Activated CD8-positive, alpha-beta T cell treated with anti-CD3 and anti-CD28 coated beads, Interleukin-2, amount 10 ng/mL, durations not matched to agents 7 days and 5 days (primary cell): ENCODE measurements at regions of chr3 and their contacts with region 1.

Region 1: GRCh38 chr3:119240591-119241434 is at the start of gene B4GALT4:
- DNase-seq: peak; percentile 85
- ATAC-seq: peak; percentile 87
- H3K4me3 Mint-ChIP-seq: peak within 1 kb of the TSS; percentile 79
- H3K27ac Mint-ChIP-seq: peak within 1 kb of the TSS; percentile 80
- H3K4me1 Mint-ChIP-seq: peaks cover 45% of the 10 kb centered on the region
- H3K27me3 Mint-ChIP-seq: no peaks in the 10 kb centered on the region
- total RNA-seq, gene B4GALT4: 16.3 to 16.4 TPM

Region 2: DNA sequence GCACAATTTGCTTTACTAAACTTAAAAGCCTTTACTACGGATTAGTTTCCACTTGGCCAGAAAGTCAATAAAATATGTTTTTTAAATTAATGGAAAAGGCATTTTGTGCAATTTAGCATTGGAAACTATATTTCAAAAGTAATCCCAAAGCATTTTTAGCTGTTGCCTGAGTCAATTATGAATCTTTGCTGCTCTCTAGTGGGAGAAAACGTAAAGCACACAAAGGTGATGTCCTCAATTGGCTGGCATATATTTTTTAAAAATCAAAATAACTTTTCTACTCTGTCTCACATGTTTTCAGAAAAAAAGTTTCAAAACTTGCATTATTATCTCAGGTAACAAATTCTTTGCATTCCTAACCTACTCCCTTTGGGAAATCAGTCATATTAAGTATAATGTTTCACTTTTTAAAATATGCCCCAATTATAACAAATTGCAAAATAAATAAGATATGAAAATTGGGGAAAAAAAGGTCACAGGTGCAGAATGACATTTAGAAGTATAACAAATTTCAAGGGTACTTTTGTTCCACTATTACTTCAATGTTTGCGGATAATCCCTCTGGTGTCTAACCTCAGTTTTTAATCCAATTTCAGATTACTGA is 142.1 kb before region 1 on chr3:
- CTCF ChIA-PET with region 1: interaction called, 14 read pairs
- POLR2A ChIA-PET with region 1: no interaction called
- DNase-seq: peak; percentile 32
- ATAC-seq: no peak
- H3K4me3 Mint-ChIP-seq: no peak overlapping the region
- H3K27ac Mint-ChIP-seq: no peak overlapping the region
- H3K4me1 Mint-ChIP-seq: no peaks in the 10 kb centered on the region
- H3K27me3 Mint-ChIP-seq: peaks cover 6% of the 10 kb centered on the region

Region 3: DNA sequence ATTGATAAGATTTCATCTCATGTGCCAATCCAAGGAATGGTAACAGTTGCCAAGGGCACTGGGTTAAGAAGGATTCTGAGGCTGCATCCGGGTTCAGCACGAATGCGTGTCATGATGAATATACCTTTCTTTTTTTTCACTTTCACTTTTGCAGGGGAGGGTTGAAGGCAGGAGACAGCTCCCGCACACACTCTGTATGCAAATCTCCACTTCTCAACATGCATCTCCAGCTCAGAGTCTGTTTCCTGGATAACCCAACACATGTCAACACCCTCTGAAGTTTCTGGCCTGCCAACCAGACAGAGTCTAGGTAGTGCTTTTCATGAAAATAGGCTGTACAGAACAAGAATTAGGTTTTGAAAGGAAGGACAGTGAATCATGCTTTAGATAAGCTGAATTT is 21.7 kb before region 1 on chr3:
- CTCF ChIA-PET with region 1: interaction called, 17 read pairs
- POLR2A ChIA-PET with region 1: interaction called, 15 read pairs
- DNase-seq: peak; percentile 40
- ATAC-seq: peak; percentile 85
- H3K4me3 Mint-ChIP-seq: peak overlapping the region; percentile 3
- H3K27ac Mint-ChIP-seq: peak overlapping the region; percentile 54
- H3K4me1 Mint-ChIP-seq: peaks cover 12% of the 10 kb centered on the region
- H3K27me3 Mint-ChIP-seq: no peaks in the 10 kb centered on the region

Region 4: DNA sequence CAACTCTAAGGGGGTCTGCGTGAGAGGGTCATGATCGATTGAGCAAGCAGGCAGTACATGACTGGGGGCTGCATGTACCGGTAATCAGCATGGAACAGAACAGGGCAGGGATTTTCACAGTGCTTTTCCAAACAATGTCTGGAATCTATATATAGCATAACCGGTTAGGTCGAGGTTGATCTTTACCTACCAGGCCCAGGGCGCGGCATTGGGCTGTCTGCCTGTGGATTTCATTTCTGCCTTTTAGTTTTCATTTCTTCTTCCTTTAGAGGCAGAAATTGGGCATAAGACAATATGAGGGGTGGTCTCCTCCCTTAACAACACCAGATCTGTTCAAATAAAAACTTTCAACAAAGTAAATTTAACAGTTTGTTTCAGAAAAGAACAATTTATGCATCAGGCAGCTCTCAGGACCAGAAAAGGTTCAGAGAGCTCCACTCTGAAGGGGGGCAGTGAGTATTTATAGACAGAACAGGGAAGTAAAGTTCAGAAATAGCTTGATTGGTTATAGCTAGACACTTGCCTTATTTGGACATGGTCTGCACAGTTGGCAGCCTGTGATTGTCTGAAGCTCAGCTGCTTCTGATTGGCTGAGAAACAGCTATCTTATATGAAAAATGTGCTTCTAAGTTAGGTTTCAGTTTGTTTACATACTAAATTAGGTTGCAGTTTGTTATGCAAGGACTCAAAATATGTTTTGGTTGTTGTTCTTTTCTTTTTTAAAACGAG is 17.0 kb after region 1 on chr3:
- CTCF ChIA-PET with region 1: interaction called, 13 read pairs
- POLR2A ChIA-PET with region 1: no interaction called
- DNase-seq: no peak
- ATAC-seq: no peak
- H3K4me3 Mint-ChIP-seq: no peak overlapping the region
- H3K27ac Mint-ChIP-seq: no peak overlapping the region
- H3K4me1 Mint-ChIP-seq: peaks cover 1% of the 10 kb centered on the region
- H3K27me3 Mint-ChIP-seq: peaks cover 5% of the 10 kb centered on the region

Region 5: GRCh38 chr3:119352849-119353502 is 112.2 kb after region 1 on chr3:
- CTCF ChIA-PET with region 1: interaction called, 26 read pairs
- POLR2A ChIA-PET with region 1: interaction called, 3 read pairs
- DNase-seq: peak; percentile 27
- ATAC-seq: peak; percentile 69
- H3K4me3 Mint-ChIP-seq: no peak overlapping the region
- H3K27ac Mint-ChIP-seq: no peak overlapping the region
- H3K4me1 Mint-ChIP-seq: peaks cover 24% of the 10 kb centered on the region
- H3K27me3 Mint-ChIP-seq: peaks cover 6% of the 10 kb centered on the region